ENCODE measurements at regions of chr2 and their contacts with region 1.

Region 1: DNA sequence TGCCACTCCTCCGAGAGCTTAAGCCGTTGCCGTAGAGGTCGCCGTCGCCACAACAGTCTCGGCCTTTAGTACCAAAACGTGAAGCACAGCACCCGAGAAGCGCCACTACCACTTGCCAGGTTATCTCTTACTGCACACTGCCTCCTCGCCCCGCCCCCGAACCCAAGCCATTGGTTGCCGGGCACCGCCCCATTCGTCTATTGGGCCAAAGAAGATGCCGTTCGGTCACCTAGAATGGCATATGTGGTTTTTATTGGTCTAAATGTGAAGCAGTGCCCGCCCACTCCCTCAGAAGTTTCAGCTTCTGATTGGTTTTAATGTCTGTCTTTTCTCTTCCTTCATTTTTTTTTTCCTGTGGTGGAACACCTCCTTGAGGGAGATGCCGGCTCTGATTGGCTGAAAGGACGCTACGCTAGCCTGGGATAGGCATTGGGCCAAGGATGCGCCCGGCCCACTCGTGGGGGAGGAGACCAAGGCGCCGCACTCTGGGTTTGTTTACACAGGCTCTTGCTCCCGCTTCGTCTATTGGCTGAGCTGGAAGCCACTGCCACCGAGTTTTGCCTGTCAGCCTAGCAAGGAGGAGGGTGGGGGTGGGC is at the start of gene PAIP2B:
- DNase-seq: peak; percentile 93 to 100
- ATAC-seq: peak; percentile 94 to 96
- H3K4me3 ChIP-seq: peak within 1 kb of the TSS; percentile 90
- H3K27ac ChIP-seq: peak within 1 kb of the TSS; percentile 65 to 87
- H3K4me1 ChIP-seq: peaks cover 5% of the 10 kb centered on the region; the same call in 1 of the 3 replicates
- CTCF ChIP-seq: no peak; the same call in 2 of the 3 replicates
- EP300 ChIP-seq: no peak
- POLR2A ChIP-seq: peak; percentile 42
- RAD21 ChIP-seq: no peak
- polyA plus RNA-seq, gene PAIP2B: 0.84 and 0.94 TPM in 2 replicates

Region 2: GRCh38 chr2:71060871-71061270 is 166.2 kb before region 1 on chr2:
- CTCF ChIA-PET with region 1: no interaction called
- POLR2A ChIA-PET with region 1: no interaction called
- DNase-seq: no peak
- ATAC-seq: no peak
- H3K4me3 ChIP-seq: no peak overlapping the region
- H3K27ac ChIP-seq: no peak overlapping the region
- H3K4me1 ChIP-seq: no peaks in the 10 kb centered on the region
- CTCF ChIP-seq: no peak
- EP300 ChIP-seq: no peak
- POLR2A ChIP-seq: no peak
- RAD21 ChIP-seq: no peak

Region 3: GRCh38 chr2:71122387-71123298 is 104.4 kb before region 1 on chr2:
- CTCF ChIA-PET with region 1: no interaction called
- POLR2A ChIA-PET with region 1: no interaction called
- DNase-seq: no peak
- ATAC-seq: no peak
- H3K4me3 ChIP-seq: no peak overlapping the region
- H3K27ac ChIP-seq: no peak overlapping the region
- H3K4me1 ChIP-seq: no peaks in the 10 kb centered on the region
- CTCF ChIP-seq: no peak
- EP300 ChIP-seq: no peak
- POLR2A ChIP-seq: no peak
- RAD21 ChIP-seq: no peak

Region 4: DNA sequence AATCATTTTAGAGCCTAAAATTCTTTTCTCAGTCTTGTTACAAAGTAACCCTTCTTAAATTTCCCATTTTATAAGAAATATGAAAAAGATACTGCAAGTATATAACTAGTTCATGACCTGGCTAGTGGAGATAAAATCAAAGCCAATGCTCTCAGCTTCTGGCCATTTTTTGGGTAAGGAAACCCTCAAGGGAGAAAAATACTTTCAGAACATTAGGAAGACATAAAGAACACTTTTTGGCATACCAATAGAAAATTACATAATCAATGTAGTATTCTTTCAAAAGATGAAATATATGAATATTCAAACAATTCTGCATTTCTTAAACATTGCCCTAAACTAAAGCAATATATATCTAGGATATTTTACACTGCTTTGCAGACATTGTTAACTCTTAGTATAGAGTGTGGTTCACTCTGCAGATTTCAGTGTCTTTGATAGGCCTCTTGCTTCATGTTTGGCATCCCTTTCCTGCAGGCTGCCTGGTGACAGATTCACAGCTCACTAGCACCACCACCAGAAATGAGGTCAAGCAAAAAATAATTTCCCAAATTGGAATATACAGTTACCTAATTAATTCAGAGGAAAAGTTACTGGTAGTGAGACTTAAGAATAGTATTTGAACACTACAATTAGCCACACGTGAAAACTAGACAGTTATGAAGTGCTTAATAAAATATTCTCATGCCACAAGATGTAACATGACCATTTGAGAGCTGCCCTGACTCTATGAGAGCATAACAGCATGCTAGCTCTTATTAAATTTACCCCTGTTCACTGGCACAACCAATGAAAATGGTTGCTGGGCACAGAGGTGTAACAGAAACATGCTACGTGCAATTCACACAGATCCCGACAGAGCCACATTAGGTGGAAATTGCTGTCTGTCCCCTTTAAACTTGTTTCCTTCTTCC is 36.1 kb before region 1 on chr2:
- CTCF ChIA-PET with region 1: interaction called, 12 read pairs
- POLR2A ChIA-PET with region 1: no interaction called
- DNase-seq: peak in 1 of 2 experiments; percentile 42
- ATAC-seq: peak; percentile 72 to 79
- H3K4me3 ChIP-seq: no peak overlapping the region
- H3K27ac ChIP-seq: no peak overlapping the region
- H3K4me1 ChIP-seq: no peaks in the 10 kb centered on the region
- CTCF ChIP-seq: peak; percentile 55
- EP300 ChIP-seq: no peak
- POLR2A ChIP-seq: no peak
- RAD21 ChIP-seq: peak; percentile 58 to 62; a peak in 4 of 5 replicates

Region 5: GRCh38 chr2:71250945-71251344 is 23.9 kb after region 1 on chr2:
- CTCF ChIA-PET with region 1: interaction called, 12 read pairs
- POLR2A ChIA-PET with region 1: interaction called, 3 read pairs
- DNase-seq: no peak
- ATAC-seq: no peak
- H3K4me3 ChIP-seq: no peak overlapping the region
- H3K27ac ChIP-seq: no peak overlapping the region
- H3K4me1 ChIP-seq: no peaks in the 10 kb centered on the region
- CTCF ChIP-seq: no peak
- EP300 ChIP-seq: no peak
- POLR2A ChIP-seq: no peak
- RAD21 ChIP-seq: no peak

Region 6: GRCh38 chr2:71282495-71282894 is 55.4 kb after region 1 on chr2:
- CTCF ChIA-PET with region 1: interaction called, 25 read pairs
- POLR2A ChIA-PET with region 1: interaction called, 7 read pairs
- DNase-seq: peak in 1 of 2 experiments; percentile 41
- ATAC-seq: peak; percentile 79 to 89
- H3K4me3 ChIP-seq: no peak overlapping the region
- H3K27ac ChIP-seq: no peak overlapping the region
- H3K4me1 ChIP-seq: peaks cover 5% of the 10 kb centered on the region; the same call in 1 of the 3 replicates
- CTCF ChIP-seq: peak; percentile 36; the same call in 2 of the 3 replicates
- EP300 ChIP-seq: no peak
- POLR2A ChIP-seq: no peak
- RAD21 ChIP-seq: peak; percentile 37 to 54; a peak in 3 of 5 replicates

Region 7: DNA sequence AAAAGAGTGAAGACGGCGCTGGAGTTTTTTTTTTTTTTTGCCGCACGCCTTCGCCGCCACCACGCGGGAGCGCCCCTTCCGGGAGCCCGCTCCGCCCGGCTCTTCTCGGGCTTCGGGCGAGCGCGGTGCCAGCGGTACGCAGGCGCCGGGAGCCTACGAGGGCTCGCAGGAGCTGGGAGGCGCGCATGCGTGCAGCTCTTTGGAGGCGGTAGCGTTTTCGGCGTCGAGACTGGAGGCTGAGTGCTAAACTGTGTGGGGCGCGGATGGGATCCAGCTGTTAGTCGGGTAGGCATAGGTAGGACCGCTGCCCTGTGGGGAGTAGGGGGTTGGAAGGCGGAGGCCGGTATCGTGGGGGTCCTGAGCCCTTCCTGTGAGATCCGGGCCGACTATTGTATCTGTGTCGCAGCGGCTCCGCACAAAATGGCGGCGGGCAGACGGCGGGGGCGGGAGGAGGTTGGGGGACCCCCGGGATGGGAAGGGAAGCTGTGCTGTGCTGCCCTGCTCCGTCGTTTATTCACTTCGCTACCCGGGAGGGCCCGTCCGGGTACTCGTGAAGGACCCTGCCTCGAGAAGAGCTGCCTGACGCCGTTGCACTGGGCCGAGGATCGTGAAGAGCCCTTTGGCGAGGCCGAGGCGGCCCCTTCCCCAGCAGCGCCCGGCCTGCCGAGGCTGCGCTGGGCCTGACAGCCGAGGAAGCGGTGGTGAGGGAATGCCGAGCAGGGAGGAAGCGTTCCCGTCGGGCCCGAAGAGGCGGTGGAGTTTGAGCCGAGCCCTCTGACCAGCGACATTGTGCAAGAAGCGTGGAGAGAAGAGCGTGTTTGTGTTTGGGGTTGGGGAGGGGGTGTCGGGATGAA is 104.7 kb after region 1 on chr2 and contains the start of gene ZNF638:
- CTCF ChIA-PET with region 1: interaction called, 32 read pairs
- POLR2A ChIA-PET with region 1: interaction called, 12 read pairs
- DNase-seq: peak; percentile 92 to 94
- ATAC-seq: peak; percentile 98 to 99
- H3K4me3 ChIP-seq: peak within 1 kb of the TSS; percentile 89
- H3K27ac ChIP-seq: peak within 1 kb of the TSS; percentile 88 to 96
- H3K4me1 ChIP-seq: peaks cover 29% of the 10 kb centered on the region
- CTCF ChIP-seq: peak; percentile 95
- EP300 ChIP-seq: no peak
- POLR2A ChIP-seq: peak; percentile 90
- RAD21 ChIP-seq: peak in 1 of 2 experiments; percentile 63; a peak in 3 of 5 replicates
- polyA plus RNA-seq, gene ZNF638: 148 and 160 TPM in 2 replicates

Measured in A549 (cell line).